ENCODE measurements at regions of chr7 and their contacts with region 1.

Region 1: GRCh38 chr7:134514663-134515062 is 12.7 kb upstream of the AKR1B10 start:
- DNase-seq: no peak
- H3K4me3 Mint-ChIP-seq: no peak overlapping the region
- H3K27ac Mint-ChIP-seq: no peak overlapping the region
- H3K4me1 Mint-ChIP-seq: peaks cover 6% of the 10 kb centered on the region
- H3K27me3 Mint-ChIP-seq: peaks cover 8% of the 10 kb centered on the region

Region 2: GRCh38 chr7:134480736-134481135 is 33.9 kb before region 1 on chr7:
- CTCF ChIA-PET with region 1: interaction called, 13 read pairs
- POLR2A ChIA-PET with region 1: no interaction called
- intact Hi-C with region 1: no loop called
- DNase-seq: no peak
- H3K4me3 Mint-ChIP-seq: no peak overlapping the region
- H3K27ac Mint-ChIP-seq: no peak overlapping the region
- H3K4me1 Mint-ChIP-seq: no peaks in the 10 kb centered on the region
- H3K27me3 Mint-ChIP-seq: peaks cover 6% of the 10 kb centered on the region

Region 3: GRCh38 chr7:134542195-134542771 is 27.6 kb after region 1 on chr7:
- CTCF ChIA-PET with region 1: interaction called, 16 read pairs
- POLR2A ChIA-PET with region 1: no interaction called
- intact Hi-C with region 1: loop called (anchors 1 kb)
- DNase-seq: no peak
- H3K4me3 Mint-ChIP-seq: no peak overlapping the region
- H3K27ac Mint-ChIP-seq: no peak overlapping the region
- H3K4me1 Mint-ChIP-seq: no peaks in the 10 kb centered on the region
- H3K27me3 Mint-ChIP-seq: peaks cover 7% of the 10 kb centered on the region

Region 4: DNA sequence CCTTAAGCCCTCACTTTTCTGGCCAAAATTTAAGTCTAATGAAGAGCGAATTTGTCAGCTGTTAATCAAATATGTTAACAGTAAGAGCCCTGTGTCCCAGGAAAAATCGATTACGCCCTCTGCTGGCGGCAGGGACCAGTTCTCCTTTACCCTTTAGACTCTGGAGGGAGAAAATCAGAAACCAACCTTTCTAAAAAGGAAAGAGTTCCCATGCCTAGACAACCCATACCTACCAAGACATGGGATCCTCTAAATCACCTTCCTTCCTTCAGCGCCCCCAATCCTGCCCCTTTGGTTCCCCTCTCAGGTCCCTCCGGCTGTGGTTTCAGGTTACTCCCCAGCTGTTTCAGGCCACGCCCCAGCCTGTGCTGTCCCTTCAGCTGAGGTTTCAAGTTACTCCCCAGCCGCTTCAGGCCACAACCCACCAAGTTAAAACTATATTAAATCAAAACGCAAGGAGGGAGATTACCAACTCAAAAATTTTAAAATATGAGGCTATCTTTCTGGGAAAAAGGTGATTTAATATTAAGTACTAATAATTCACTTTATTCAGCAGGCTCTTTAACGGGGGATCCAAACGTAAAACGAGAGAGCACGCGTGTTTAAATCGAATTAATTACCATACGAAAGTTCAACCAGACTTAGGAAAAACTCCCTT is 32.9 kb after region 1 on chr7:
- CTCF ChIA-PET with region 1: interaction called, 16 read pairs
- POLR2A ChIA-PET with region 1: no interaction called
- intact Hi-C with region 1: loop called (anchors 1 kb)
- DNase-seq: peak; percentile 73
- H3K4me3 Mint-ChIP-seq: no peak overlapping the region
- H3K27ac Mint-ChIP-seq: no peak overlapping the region
- H3K4me1 Mint-ChIP-seq: peaks cover 4% of the 10 kb centered on the region
- H3K27me3 Mint-ChIP-seq: peaks cover 5% of the 10 kb centered on the region